ENCODE measurements at regions of chr19 and their contacts with region 1.

Region 1: GRCh38 chr19:16076154-16076957 is at the start of gene TPM4:
- DNase-seq: peak; percentile 88
- H3K4me3 Mint-ChIP-seq: peak within 1 kb of the TSS; percentile 88
- H3K27ac Mint-ChIP-seq: peak within 1 kb of the TSS; percentile 98
- H3K4me1 Mint-ChIP-seq: peaks cover 70% of the 10 kb centered on the region
- H3K27me3 Mint-ChIP-seq: no peaks in the 10 kb centered on the region
- total RNA-seq, gene TPM4: 346 and 351 TPM in 2 replicates

Region 2: DNA sequence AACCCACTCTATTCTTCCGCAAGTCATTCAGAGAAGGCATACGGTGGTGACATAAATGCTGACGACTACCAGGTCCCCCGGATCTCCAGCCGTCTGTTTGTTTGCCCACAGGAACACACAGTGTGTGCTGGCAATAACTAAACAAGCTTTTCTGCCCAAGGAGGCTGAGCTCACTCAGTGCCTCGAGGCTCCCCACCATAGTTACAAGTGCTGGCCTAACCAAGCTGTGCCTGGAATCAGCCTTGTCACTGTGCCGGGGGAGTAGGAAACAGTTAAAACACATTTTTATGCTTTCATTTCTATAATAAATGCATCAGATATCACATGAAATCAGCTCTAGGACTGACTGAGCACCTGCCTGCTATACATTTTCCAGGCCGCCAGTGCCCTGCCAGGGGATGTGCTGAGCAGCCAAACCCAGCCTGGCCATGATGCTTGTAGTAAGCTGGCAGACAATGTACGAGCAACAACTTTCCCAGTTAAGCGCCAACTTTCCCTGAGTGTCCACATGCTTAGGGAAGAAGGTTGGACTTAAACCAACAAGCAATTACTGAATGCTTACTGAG is 772.1 kb before region 1 on chr19:
- intact Hi-C with region 1: loop called (anchors 2 kb)
- DNase-seq: no peak
- H3K4me3 Mint-ChIP-seq: no peak overlapping the region
- H3K27ac Mint-ChIP-seq: peak overlapping the region; percentile 80
- H3K4me1 Mint-ChIP-seq: peaks cover 64% of the 10 kb centered on the region
- H3K27me3 Mint-ChIP-seq: no peaks in the 10 kb centered on the region

Region 3: DNA sequence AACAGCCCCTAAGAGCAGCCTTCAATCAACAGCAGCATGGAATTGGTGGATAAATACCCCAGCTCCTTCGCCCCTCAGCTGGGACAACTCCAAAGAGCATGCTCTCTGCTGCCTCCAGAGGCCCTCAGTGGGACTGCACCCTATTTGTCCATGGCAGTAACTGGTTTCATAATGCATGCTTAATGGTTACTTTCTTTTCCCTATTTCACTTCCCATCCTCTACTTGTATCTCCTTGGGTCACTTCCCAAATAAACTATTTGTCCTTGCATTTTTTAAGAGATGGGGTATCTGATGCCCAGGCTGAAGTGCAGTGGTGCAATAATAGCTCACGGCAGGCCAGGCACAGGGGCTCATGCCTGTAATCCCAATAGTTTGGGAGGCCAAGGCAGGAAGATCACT is 13.6 kb before region 1 on chr19:
- intact Hi-C with region 1: loop called (anchors 1 kb)
- DNase-seq: peak; percentile 55
- H3K4me3 Mint-ChIP-seq: no peak overlapping the region
- H3K27ac Mint-ChIP-seq: no peak overlapping the region
- H3K4me1 Mint-ChIP-seq: peaks cover 24% of the 10 kb centered on the region
- H3K27me3 Mint-ChIP-seq: peaks cover 4% of the 10 kb centered on the region

Region 4: DNA sequence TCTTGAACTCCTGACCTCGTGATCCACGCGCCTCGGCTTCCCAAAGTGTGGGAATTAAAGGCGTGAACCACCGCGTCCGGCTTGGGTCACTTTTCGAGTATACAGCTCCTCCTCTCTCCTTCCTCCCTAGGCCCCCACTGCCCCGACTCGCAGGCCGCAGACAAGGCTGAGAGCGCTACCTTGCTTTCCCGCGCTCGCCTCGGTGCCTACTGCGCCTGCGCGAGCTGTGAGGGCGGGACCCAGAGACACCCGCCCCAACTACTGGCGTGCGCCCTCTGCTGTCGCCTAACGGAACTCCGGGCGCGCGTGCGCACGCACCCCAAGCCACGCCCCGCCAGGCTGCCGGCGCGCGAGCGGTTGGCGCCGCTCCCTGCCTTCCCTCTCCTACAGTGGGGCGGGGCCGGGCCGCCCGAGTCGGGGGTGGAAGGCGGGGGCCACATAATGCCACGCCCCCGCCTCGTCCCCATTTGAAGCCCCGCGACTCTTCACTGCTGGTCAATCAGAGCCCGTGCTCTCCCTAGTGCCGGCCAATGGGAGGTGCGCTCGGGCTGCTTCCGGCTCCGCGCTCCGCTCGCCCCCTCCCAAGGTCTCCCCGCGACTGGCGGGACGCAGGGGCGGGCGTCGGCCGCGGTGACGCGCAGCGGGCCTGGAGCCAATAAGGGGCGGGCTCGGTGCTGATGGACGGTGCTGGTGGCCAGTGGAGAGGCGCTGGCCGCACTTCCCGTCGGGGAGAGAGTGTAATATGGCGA is 35.0 kb after region 1 on chr19 and contains the start of gene RAB8A:
- intact Hi-C with region 1: loop called (anchors 1 kb)
- DNase-seq: peak; percentile 99
- H3K4me3 Mint-ChIP-seq: peak within 1 kb of the TSS; percentile 98
- H3K27ac Mint-ChIP-seq: peak within 1 kb of the TSS; percentile 95
- H3K4me1 Mint-ChIP-seq: peaks cover 27% of the 10 kb centered on the region
- H3K27me3 Mint-ChIP-seq: peaks cover 1% of the 10 kb centered on the region
- total RNA-seq, gene RAB8A: 235 and 248 TPM in 2 replicates

Region 5: GRCh38 chr19:16197622-16198369 is 121.4 kb after region 1 on chr19 and contains the start of gene AP1M1:
- intact Hi-C with region 1: loop called (anchors 1 kb)
- DNase-seq: peak; percentile 99
- H3K4me3 Mint-ChIP-seq: peak within 1 kb of the TSS; percentile 95
- H3K27ac Mint-ChIP-seq: peak within 1 kb of the TSS; percentile 95
- H3K4me1 Mint-ChIP-seq: peaks cover 51% of the 10 kb centered on the region
- H3K27me3 Mint-ChIP-seq: no peaks in the 10 kb centered on the region
- total RNA-seq, gene AP1M1: 116 and 117 TPM in 2 replicates

Region 6: GRCh38 chr19:16628183-16628983 is 552.0 kb after region 1 on chr19 and contains the start of gene MED26:
- intact Hi-C with region 1: loop called (anchors 1 kb)
- DNase-seq: peak; percentile 91
- H3K4me3 Mint-ChIP-seq: peak within 1 kb of the TSS; percentile 97
- H3K27ac Mint-ChIP-seq: peak within 1 kb of the TSS; percentile 99
- H3K4me1 Mint-ChIP-seq: peaks cover 47% of the 10 kb centered on the region
- H3K27me3 Mint-ChIP-seq: no peaks in the 10 kb centered on the region
- total RNA-seq, gene MED26: 14.0 and 14.9 TPM in 2 replicates

Measured in activated T-helper 1 cell treated with anti-CD3 and anti-CD28 coated beads, Interleukin-12 subunit alpha, Interleukin-12 subunit beta, Interleukin-2, Interleukin-4 antibody, amounts not matched to agents 30 ng/mL and 10 ng/mL and 1 ng/mL, durations not matched to agents 14 hours and 24 hours and 36 hours (primary cell).